Heart left ventricle (tissue), 16 donors: ENCODE measurements at regions of chr6 and their contacts with region 1.

Region 1: GRCh38 chr6:99119109-99120031 is 171.6 kb upstream of the FBXL4 start:
- DNase-seq: no peak
- ATAC-seq: peak in 2 of 4 donors; percentile 42 to 45
- H3K4me3 ChIP-seq: no peak overlapping the region
- H3K27ac ChIP-seq: no peak overlapping the region
- H3K4me1 ChIP-seq: no peaks in the 10 kb centered on the region
- H3K27me3 ChIP-seq: peaks cover 0 to 34% (median 0%) of the 10 kb centered on the region in 9 donors
- CTCF ChIP-seq: peak; percentile 43 to 74 (median 59)
- POLR2A ChIP-seq: no peak

Region 2: DNA sequence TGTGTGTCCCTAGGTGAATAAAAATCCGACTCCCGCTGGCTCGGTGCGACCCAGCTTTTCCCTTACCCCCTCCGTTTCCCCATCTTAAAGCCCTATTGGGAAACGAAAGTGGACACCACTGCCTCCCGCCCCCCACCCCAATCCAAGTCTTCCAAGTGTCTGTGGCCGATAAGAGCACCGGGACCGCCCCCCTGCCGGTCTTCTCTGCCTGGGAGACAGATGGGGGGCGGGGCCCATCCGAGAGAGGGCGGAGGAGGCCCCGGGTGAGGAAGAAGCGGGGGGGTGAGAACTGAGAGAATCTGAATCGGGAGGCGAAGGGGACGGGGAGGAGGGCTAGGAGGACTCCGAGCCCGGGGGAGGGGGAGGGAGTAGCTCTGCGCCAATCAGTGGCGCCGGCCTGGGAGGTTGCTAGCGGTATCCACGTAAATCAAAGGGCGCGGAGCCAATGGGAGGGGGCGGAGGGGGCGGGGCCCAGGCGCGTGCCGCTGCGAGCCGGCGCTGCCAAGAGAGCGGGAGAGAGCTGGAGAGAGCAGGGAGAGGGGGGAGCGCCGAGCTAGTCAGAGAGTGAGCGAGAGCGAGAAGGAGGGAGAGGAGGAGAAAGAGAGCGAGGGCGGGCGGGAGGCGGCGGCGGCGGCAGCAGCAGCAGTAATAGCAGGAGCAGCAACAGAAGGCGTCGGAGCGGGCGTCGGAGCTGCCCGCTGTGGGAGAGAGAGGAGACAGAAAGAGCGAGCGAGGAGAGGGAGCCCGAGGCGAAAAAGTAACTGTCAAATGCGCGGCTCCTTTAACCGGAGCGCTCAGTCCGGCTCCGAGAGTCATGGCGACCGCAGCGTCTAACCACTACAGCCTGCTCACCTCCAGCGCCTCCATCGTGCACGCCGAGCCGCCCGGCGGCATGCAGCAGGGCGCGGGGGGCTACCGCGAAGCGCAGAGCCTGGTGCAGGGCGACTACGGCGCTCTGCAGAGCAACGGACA is 285.0 kb before region 1 on chr6 and contains the start of gene POU3F2:
- intact Hi-C with region 1: loop called in 2 of 10 experiments (anchors 5 to 10 kb)
- DNase-seq: peak in 4 of 5 donors; percentile 42 to 76 (median 55)
- ATAC-seq: peak; percentile 37 to 77 (median 67)
- H3K4me3 ChIP-seq: peak within 1 kb of the TSS; percentile 35 to 63 (median 50)
- H3K27ac ChIP-seq: no peak within 1 kb of the TSS
- H3K4me1 ChIP-seq: peaks cover 2 to 52% (median 34%) of the 10 kb centered on the region in 12 donors
- H3K27me3 ChIP-seq: peaks cover 61 to 100% (median 94%) of the 10 kb centered on the region in 9 donors
- CTCF ChIP-seq: no peak
- POLR2A ChIP-seq: no peak
- total RNA-seq, gene POU3F2: not detected

Region 3: GRCh38 chr6:98845211-98846020 is 274.0 kb before region 1 on chr6:
- intact Hi-C with region 1: loop called in 2 of 10 experiments (anchors 5 to 10 kb)
- DNase-seq: peak; percentile 63 to 81 (median 72)
- ATAC-seq: peak; percentile 24 to 84 (median 74)
- H3K4me3 ChIP-seq: peak overlapping the region in 9 of 12 donors; percentile 1 to 40 (median 34)
- H3K27ac ChIP-seq: no peak overlapping the region
- H3K4me1 ChIP-seq: peaks cover 0 to 43% (median 22%) of the 10 kb centered on the region in 12 donors
- H3K27me3 ChIP-seq: peaks cover 37 to 99% (median 81%) of the 10 kb centered on the region in 9 donors
- CTCF ChIP-seq: peak; percentile 62 to 81 (median 76)
- POLR2A ChIP-seq: no peak

Region 4: GRCh38 chr6:98944598-98945081 is 174.7 kb before region 1 on chr6:
- intact Hi-C with region 1: no loop called
- DNase-seq: no peak
- ATAC-seq: no peak
- H3K4me3 ChIP-seq: no peak overlapping the region
- H3K27ac ChIP-seq: no peak overlapping the region
- H3K4me1 ChIP-seq: peaks cover 0 to 27% (median 14%) of the 10 kb centered on the region in 12 donors
- H3K27me3 ChIP-seq: no peaks in the 10 kb centered on the region
- CTCF ChIP-seq: no peak
- POLR2A ChIP-seq: no peak